Breast epithelium (tissue), 4 donors: ENCODE measurements at regions of chr1 and their contacts with region 1.

Region 1: GRCh38 chr1:5067246-5067645 is 412.8 kb downstream of the AJAP1 start:
- DNase-seq: no peak
- H3K4me3 ChIP-seq: no peak overlapping the region
- H3K27ac ChIP-seq: no peak overlapping the region
- H3K4me1 ChIP-seq: no peaks in the 10 kb centered on the region
- H3K27me3 ChIP-seq: no peaks in the 10 kb centered on the region
- CTCF ChIP-seq: no peak
- POLR2A ChIP-seq: no peak

Region 2: DNA sequence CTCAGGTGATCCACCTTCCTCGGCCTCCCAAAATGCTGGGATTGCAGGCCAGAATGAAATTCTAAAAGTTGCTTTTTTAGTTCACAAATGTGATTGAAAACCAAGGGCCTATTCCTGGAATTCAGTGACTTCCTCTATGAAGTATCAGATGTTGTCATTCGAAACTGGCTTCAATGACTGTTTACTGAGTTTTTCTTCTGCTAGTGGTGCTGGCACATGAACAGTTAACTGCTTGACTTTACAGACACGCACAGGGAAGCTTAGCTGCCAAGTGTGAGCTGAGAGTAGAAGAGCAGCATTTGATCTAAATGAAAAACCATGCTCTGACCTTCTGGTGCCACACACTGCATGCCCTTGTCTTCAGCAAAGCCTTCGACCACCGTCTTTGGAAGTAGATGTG is 445.6 kb before region 1 on chr1:
- intact Hi-C with region 1: loop called (anchors 5 kb)
- DNase-seq: no peak
- H3K4me3 ChIP-seq: no peak overlapping the region
- H3K27ac ChIP-seq: no peak overlapping the region
- H3K4me1 ChIP-seq: no peaks in the 10 kb centered on the region
- H3K27me3 ChIP-seq: peaks cover 0 to 5% of the 10 kb centered on the region in 2 donors
- CTCF ChIP-seq: no peak
- POLR2A ChIP-seq: no peak

Region 3: DNA sequence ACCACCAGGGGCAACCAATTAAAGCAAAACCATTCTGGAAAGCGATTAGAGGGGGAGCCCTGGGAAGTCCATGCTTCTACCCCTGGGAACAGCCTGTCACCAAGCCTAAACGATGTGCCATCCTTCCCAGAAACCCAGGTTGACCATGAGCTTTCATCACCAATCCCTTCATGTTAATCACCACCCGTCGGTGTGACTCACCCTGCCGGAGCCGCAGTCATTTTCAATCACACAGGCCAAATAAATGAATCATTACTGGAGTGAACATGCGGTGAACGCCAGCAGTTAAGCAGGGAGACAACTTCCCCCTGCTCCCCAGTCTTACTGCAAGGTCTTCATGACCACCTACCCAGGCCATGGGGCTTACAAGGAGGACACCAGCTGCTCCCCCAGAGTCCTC is 104.0 kb before region 1 on chr1:
- intact Hi-C with region 1: no loop called
- DNase-seq: no peak
- H3K4me3 ChIP-seq: no peak overlapping the region
- H3K27ac ChIP-seq: no peak overlapping the region
- H3K4me1 ChIP-seq: no peaks in the 10 kb centered on the region
- H3K27me3 ChIP-seq: peaks cover 0 to 42% of the 10 kb centered on the region in 2 donors
- CTCF ChIP-seq: no peak
- POLR2A ChIP-seq: no peak

Region 4: GRCh38 chr1:5029136-5029535 is 38.1 kb before region 1 on chr1:
- intact Hi-C with region 1: loop called (anchors 2 kb)
- DNase-seq: no peak
- H3K4me3 ChIP-seq: no peak overlapping the region
- H3K27ac ChIP-seq: no peak overlapping the region
- H3K4me1 ChIP-seq: no peaks in the 10 kb centered on the region
- H3K27me3 ChIP-seq: peaks cover 0 to 7% of the 10 kb centered on the region in 2 donors
- CTCF ChIP-seq: no peak
- POLR2A ChIP-seq: no peak

Region 5: DNA sequence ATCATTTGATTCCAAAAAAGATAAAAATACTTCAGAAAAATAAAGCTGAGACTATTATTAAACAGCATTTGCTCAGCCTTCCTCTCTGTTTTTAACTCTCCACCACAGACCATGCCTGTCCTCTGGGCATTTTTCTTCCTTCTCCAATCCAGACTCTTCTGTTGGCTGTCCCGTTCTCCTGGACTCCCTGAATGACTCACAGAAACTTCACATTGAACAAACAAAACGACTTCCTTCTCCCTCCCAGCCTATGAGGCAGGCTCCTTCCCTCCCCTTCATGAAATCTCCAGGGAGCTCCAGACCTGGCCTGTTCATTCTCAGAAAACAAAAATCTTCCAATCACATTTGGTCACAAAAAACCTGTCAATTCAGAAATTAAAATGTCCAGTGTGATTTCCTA is 503.7 kb after region 1 on chr1:
- intact Hi-C with region 1: no loop called
- DNase-seq: no peak
- H3K4me3 ChIP-seq: no peak overlapping the region
- H3K27ac ChIP-seq: no peak overlapping the region
- H3K4me1 ChIP-seq: no peaks in the 10 kb centered on the region
- H3K27me3 ChIP-seq: peaks cover 0 to 6% of the 10 kb centered on the region in 2 donors
- CTCF ChIP-seq: no peak
- POLR2A ChIP-seq: no peak